ENCODE measurements at regions of chr10 and their contacts with region 1.

Region 1: GRCh38 chr10:36578306-36578705 is 547.1 kb upstream of the ANKRD30A start:
- DNase-seq: no peak
- H3K4me3 ChIP-seq: no peak overlapping the region
- H3K27ac ChIP-seq: no peak overlapping the region
- H3K4me1 ChIP-seq: peaks cover 0 to 4% (median 0%) of the 10 kb centered on the region in 4 donors
- H3K27me3 ChIP-seq: no peaks in the 10 kb centered on the region
- CTCF ChIP-seq: no peak

Region 2: GRCh38 chr10:36462194-36462593 is 116.1 kb before region 1 on chr10:
- intact Hi-C with region 1: no loop called
- DNase-seq: no peak
- H3K4me3 ChIP-seq: no peak overlapping the region
- H3K27ac ChIP-seq: no peak overlapping the region
- H3K4me1 ChIP-seq: no peaks in the 10 kb centered on the region
- H3K27me3 ChIP-seq: no peaks in the 10 kb centered on the region
- CTCF ChIP-seq: no peak

Region 3: DNA sequence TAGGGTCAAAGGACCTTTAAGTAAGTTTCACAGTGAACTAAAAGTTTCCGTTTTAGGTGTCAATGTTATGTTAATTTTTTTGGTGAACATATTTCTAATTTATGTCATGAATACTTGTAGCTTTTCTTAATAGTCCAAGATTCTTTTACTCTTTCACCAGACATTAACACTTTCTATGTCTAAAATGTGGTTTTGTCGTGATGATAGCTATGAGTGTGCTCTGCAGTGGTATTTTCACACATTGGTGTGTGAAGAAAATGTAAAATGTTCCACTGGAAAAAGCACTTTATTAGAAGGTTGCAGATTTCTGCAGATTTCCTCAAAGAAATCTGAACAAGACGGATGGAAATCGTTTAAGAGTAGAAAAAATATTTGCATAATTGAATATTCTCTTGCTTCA is 13.9 kb before region 1 on chr10:
- intact Hi-C with region 1: loop called (anchors 1 kb)
- DNase-seq: no peak
- H3K4me3 ChIP-seq: no peak overlapping the region
- H3K27ac ChIP-seq: no peak overlapping the region
- H3K4me1 ChIP-seq: peaks cover 0 to 5% (median 0%) of the 10 kb centered on the region in 4 donors
- H3K27me3 ChIP-seq: no peaks in the 10 kb centered on the region
- CTCF ChIP-seq: no peak

Region 4: GRCh38 chr10:37275216-37275777 is 697.0 kb after region 1 on chr10:
- intact Hi-C with region 1: no loop called
- DNase-seq: no peak
- H3K4me3 ChIP-seq: no peak overlapping the region
- H3K27ac ChIP-seq: no peak overlapping the region
- H3K4me1 ChIP-seq: no peaks in the 10 kb centered on the region
- H3K27me3 ChIP-seq: no peaks in the 10 kb centered on the region
- CTCF ChIP-seq: no peak

Measured in tibial artery (tissue), 4 donors.